Panc1 (cell line): ENCODE measurements at regions of chr11 and their contacts with region 1.

Region 1: GRCh38 chr11:47705721-47706120 is 9.4 kb downstream of the AGBL2 start:
- DNase-seq: no peak
- ATAC-seq: peak; percentile 34; the same call in 1 of the 2 replicates
- H3K4me3 ChIP-seq: no peak overlapping the region
- H3K27ac ChIP-seq: no peak overlapping the region
- H3K4me1 ChIP-seq: no peaks in the 10 kb centered on the region
- H3K27me3 ChIP-seq: no peaks in the 10 kb centered on the region
- CTCF ChIP-seq: no peak

Region 2: GRCh38 chr11:47631473-47631872 is 74.2 kb before region 1 on chr11:
- CTCF ChIA-PET with region 1: no interaction called
- POLR2A ChIA-PET with region 1: interaction called, 13 read pairs
- in situ Hi-C with region 1: no loop called
- intact Hi-C with region 1: no loop called
- DNase-seq: no peak
- ATAC-seq: peak; percentile 65
- H3K4me3 ChIP-seq: no peak overlapping the region
- H3K27ac ChIP-seq: no peak overlapping the region
- H3K4me1 ChIP-seq: no peaks in the 10 kb centered on the region
- H3K27me3 ChIP-seq: no peaks in the 10 kb centered on the region
- CTCF ChIP-seq: no peak

Region 3: DNA sequence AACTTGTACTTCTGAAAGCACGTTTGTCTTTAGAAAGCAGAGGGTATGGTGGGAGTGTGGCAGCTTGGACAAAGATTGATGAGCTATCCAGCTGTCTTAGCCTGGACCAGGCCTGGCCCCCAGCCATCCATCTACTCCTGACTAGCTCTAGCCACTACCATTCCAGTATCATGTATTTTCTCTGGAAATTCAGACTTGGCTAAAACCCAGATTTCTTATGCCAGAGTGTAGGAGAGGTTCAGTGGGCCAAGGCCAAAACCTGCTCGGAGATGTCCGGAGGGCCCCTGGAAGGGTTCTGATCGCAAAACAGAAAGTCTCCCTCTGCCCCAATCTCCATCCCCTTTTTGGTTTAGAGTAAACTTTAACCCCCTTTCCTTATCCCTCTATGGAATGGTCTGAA is 38.6 kb before region 1 on chr11:
- CTCF ChIA-PET with region 1: no interaction called
- POLR2A ChIA-PET with region 1: interaction called, 10 read pairs
- in situ Hi-C with region 1: no loop called
- intact Hi-C with region 1: no loop called
- DNase-seq: no peak
- ATAC-seq: no peak
- H3K4me3 ChIP-seq: no peak overlapping the region
- H3K27ac ChIP-seq: no peak overlapping the region
- H3K4me1 ChIP-seq: no peaks in the 10 kb centered on the region
- H3K27me3 ChIP-seq: no peaks in the 10 kb centered on the region
- CTCF ChIP-seq: no peak